PC-3 (cell line): ENCODE measurements at regions of chr6 and their contacts with region 1.

Region 1: DNA sequence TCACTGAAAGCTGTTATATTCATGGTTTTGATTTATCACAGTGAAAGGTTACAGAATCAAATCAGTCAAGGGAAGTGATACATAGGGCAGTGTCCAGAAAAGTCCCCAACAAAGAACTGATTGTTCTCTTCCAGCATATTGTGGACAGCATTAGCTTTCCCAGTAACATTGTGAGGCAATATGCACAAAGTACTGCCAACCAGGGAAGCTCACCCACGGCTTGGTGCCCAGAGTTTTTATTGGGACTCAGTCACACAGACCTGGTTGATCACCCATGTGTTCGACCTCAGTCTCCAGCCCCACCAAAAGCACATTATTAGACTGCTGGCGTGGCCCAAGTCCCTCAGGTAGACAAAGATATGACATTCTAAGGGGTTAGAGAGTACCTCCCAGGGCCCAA is 76.0 kb downstream of the LCA5 start:
- DNase-seq: peak; percentile 49
- ATAC-seq: peak; percentile 73
- H3K4me3 ChIP-seq: no peak overlapping the region
- H3K27ac ChIP-seq: no peak overlapping the region
- H3K4me1 ChIP-seq: peaks cover 21% of the 10 kb centered on the region
- H3K27me3 ChIP-seq: no peaks in the 10 kb centered on the region
- CTCF ChIP-seq: no peak

Region 2: GRCh38 chr6:78810146-78810545 is 651.1 kb before region 1 on chr6:
- CTCF ChIA-PET with region 1: no interaction called
- POLR2A ChIA-PET with region 1: no interaction called
- intact Hi-C with region 1: no loop called
- DNase-seq: peak; percentile 52
- ATAC-seq: peak; percentile 48
- H3K4me3 ChIP-seq: no peak overlapping the region
- H3K27ac ChIP-seq: no peak overlapping the region
- H3K4me1 ChIP-seq: no peaks in the 10 kb centered on the region
- H3K27me3 ChIP-seq: no peaks in the 10 kb centered on the region
- CTCF ChIP-seq: peak; percentile 64

Region 3: GRCh38 chr6:79421707-79422484 is 39.3 kb before region 1 on chr6:
- CTCF ChIA-PET with region 1: no interaction called
- POLR2A ChIA-PET with region 1: no interaction called
- intact Hi-C with region 1: loop called (anchors 5 kb)
- DNase-seq: peak; percentile 87
- ATAC-seq: peak; percentile 80
- H3K4me3 ChIP-seq: peak overlapping the region; percentile 25; the same call in 1 of the 2 replicates
- H3K27ac ChIP-seq: peak overlapping the region; percentile 24; the same call in 1 of the 2 replicates
- H3K4me1 ChIP-seq: peaks cover 7% of the 10 kb centered on the region
- H3K27me3 ChIP-seq: no peaks in the 10 kb centered on the region
- CTCF ChIP-seq: no peak

Region 4: DNA sequence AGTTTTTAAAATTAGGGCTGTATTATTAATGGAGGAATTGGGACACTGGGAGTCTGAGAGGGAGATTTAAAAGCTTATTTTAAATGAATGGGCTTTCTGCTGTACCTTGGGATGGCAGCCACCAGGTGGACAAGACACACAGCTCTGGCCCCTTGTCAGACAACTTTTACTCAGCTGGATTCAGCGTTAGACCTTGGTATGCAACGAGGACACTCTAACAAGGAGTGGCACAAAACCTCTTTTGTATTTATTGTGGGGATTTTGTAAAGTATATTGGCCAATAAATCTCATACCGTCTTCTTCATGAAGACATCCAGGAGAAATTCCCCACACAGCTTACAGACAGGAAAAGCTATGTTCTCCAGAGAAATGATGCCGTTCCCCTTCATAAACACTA is 29.7 kb before region 1 on chr6:
- CTCF ChIA-PET with region 1: no interaction called
- POLR2A ChIA-PET with region 1: no interaction called
- intact Hi-C with region 1: loop called (anchors 1 kb)
- DNase-seq: peak; percentile 42
- ATAC-seq: peak; percentile 74
- H3K4me3 ChIP-seq: no peak overlapping the region
- H3K27ac ChIP-seq: no peak overlapping the region
- H3K4me1 ChIP-seq: no peaks in the 10 kb centered on the region
- H3K27me3 ChIP-seq: no peaks in the 10 kb centered on the region
- CTCF ChIP-seq: peak; percentile 49